CD4-positive, alpha-beta memory T cell (primary cell): ENCODE measurements at regions of chr19 and their contacts with region 1.

Region 1: DNA sequence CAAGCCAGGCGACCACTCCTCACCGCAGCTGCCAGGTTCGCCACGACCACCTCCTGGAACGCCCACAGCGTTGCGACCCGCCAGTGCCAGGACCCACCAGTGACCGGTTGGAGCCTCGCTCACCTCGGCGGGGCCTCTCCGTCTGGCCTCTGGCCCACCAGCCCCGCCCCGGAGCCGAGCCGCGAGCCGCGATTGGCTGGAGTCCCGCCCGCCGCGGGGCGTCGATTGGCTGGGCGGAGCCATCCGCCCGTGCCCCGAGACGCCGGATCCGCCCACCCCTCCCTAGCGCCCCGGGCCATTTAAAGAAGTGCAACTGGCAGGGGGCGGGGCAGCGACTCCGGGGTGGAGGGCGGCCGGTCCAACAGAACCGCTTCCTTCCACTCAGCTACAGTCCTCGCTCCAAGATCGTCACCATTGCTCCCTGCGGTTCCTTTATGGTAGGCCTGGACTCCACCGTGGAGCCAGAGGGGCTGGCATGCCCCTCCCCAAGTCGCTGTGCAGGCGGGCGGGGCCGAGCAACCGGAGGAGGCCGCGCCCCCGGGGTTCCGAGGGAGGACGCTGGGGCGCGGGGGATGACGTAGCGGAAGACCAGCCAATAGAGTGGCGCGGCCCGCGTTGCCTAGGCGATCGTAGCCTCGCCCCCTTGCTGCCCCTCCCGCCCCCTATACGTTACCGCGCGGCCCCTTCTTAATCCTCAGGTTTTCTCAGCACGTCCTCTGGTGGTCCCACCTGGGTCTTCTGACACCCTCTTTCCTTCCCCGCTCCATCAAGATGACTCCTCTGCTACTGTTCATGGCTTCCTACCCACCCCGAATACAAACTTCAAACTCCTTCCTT is at the start of gene SERTAD3:
- DNase-seq: peak; percentile 96 to 99 (median 97)
- H3K4me3 ChIP-seq: peak within 1 kb of the TSS; percentile 96 to 100
- H3K4me3 Mint-ChIP-seq: peak within 1 kb of the TSS; percentile 96 to 100 (median 100)
- H3K27ac ChIP-seq: peak within 1 kb of the TSS; percentile 75
- H3K27ac Mint-ChIP-seq: peak within 1 kb of the TSS; percentile 85 to 100 (median 99)
- H3K4me1 ChIP-seq: peaks cover 11% of the 10 kb centered on the region
- H3K4me1 Mint-ChIP-seq: peaks cover 11 to 22% (median 18%) of the 10 kb centered on the region in 4 donors
- H3K27me3 ChIP-seq: no peaks in the 10 kb centered on the region
- H3K27me3 Mint-ChIP-seq: no peaks in the 10 kb centered on the region
- total RNA-seq, gene SERTAD3: 17.8 to 19.4 TPM

Region 2: DNA sequence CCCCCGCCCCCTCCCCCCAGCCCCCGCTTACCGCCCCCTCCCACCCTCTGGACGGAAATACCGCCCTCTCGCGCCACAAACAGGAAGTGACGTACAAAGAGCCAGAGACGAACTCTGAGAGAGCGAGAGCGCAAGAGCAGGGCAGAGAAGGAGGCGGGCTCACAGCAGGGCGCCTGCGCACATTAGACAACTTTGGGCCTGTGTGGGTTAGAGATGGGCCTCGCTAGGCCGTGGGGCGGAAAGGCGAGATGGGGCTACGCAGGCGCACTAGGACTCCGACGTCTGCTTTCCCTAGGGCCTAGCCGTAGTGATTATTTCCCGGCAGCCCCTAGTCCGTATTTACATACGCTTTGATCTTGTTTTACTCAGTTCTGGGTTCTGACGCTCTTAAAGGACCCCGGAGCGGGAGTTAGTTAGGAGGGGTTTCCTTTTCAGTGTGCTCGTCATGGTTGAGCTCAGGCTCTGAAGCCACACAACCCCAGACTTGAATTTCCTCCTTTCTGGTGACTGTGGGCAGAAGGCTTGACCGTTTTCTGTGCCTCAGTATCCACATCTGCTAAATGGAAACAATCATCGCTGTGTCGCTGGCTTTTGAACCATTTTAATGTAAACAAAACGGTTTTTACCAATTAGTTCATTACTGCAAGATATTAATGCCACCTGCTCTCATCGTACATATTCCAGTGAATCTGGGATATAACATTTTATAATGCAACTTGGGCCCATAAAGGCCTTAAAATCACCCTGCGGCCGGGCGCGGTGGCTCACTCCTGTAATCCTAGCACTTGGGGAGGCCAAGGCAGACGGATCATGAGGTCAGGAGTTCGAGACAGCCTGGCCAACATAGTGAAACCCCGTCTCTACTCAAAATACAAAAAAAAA is 158.8 kb before region 1 on chr19:
- CTCF ChIA-PET with region 1: no interaction called
- POLR2A ChIA-PET with region 1: interaction called, 5 read pairs
- intact Hi-C with region 1: loop called (anchors 1 kb)
- DNase-seq: peak; percentile 97 to 100 (median 100)
- H3K4me3 ChIP-seq: peak overlapping the region; percentile 45 to 58
- H3K4me3 Mint-ChIP-seq: peak overlapping the region; percentile 84 to 98 (median 92)
- H3K27ac ChIP-seq: peak overlapping the region; percentile 88
- H3K27ac Mint-ChIP-seq: peak overlapping the region; percentile 93 to 99 (median 98)
- H3K4me1 ChIP-seq: peaks cover 49% of the 10 kb centered on the region
- H3K4me1 Mint-ChIP-seq: peaks cover 26 to 56% (median 40%) of the 10 kb centered on the region in 4 donors
- H3K27me3 ChIP-seq: no peaks in the 10 kb centered on the region
- H3K27me3 Mint-ChIP-seq: no peaks in the 10 kb centered on the region

Region 3: GRCh38 chr19:40348125-40348913 is 96.1 kb before region 1 on chr19 and contains the starts of genes C19orf47 and PLD3:
- CTCF ChIA-PET with region 1: no interaction called
- POLR2A ChIA-PET with region 1: interaction called, 19 read pairs
- intact Hi-C with region 1: loop called (anchors 1 kb)
- DNase-seq: peak; percentile 97 to 99 (median 99)
- H3K4me3 ChIP-seq: peak within 1 kb of the TSS; percentile 48 to 73
- H3K4me3 Mint-ChIP-seq: peak within 1 kb of the TSS; percentile 85 to 99 (median 94)
- H3K27ac ChIP-seq: peak within 1 kb of the TSS; percentile 84
- H3K27ac Mint-ChIP-seq: peak within 1 kb of the TSS; percentile 86 to 99 (median 95)
- H3K4me1 ChIP-seq: peaks cover 19% of the 10 kb centered on the region
- H3K4me1 Mint-ChIP-seq: peaks cover 27 to 44% (median 33%) of the 10 kb centered on the region in 4 donors
- H3K27me3 ChIP-seq: no peaks in the 10 kb centered on the region
- H3K27me3 Mint-ChIP-seq: no peaks in the 10 kb centered on the region
- total RNA-seq, gene C19orf47: 13.7 to 17.7 TPM
- total RNA-seq, gene PLD3: 116 to 117 TPM

Region 4: DNA sequence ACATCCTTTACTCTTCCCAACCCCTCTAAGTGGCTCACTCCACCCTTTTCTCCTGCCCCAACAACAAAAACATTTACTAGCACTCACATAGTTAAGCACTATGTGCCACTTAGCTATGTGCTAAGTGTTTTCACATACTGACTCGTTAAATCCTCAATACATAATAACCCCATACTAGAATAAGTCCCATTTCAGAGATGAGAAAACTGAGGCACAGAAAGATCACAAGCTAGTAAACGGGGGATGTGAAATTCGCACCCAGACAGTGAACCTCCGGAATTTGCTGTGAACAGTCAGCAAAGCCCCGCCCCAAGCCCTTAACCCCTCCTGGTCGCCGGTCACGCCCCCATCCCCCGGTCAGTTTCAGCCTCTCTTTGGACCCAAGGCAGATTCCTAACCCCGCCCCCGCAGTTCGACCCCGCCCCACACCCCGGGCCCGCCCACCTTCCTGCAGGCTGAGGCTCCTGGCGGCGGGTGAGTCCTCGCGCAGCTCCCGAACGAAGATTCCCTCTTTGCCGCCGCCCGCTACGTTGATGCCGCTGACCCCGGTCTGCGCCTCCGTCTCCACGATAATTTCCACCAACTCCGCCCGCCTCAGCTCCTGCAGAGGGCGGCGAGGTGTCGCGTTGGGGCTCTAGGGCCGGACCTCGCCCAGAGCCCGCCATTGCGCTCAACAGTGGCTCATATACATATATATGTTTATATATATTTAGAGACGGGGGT is 41.0 kb before region 1 on chr19:
- CTCF ChIA-PET with region 1: no interaction called
- POLR2A ChIA-PET with region 1: interaction called, 22 read pairs
- intact Hi-C with region 1: loop called (anchors 1 kb)
- DNase-seq: peak; percentile 61 to 80 (median 64)
- H3K4me3 ChIP-seq: peak overlapping the region; percentile 59 to 69
- H3K4me3 Mint-ChIP-seq: peak overlapping the region; percentile 86 to 99 (median 96)
- H3K27ac ChIP-seq: peak overlapping the region; percentile 43
- H3K27ac Mint-ChIP-seq: peak overlapping the region; percentile 46 to 95 (median 90)
- H3K4me1 ChIP-seq: peaks cover 18% of the 10 kb centered on the region
- H3K4me1 Mint-ChIP-seq: peaks cover 22 to 38% (median 29%) of the 10 kb centered on the region in 4 donors
- H3K27me3 ChIP-seq: no peaks in the 10 kb centered on the region
- H3K27me3 Mint-ChIP-seq: no peaks in the 10 kb centered on the region

Region 5: GRCh38 chr19:40425450-40426287 is 18.7 kb before region 1 on chr19 and contains the start of gene SERTAD1:
- CTCF ChIA-PET with region 1: interaction called, 33 read pairs
- POLR2A ChIA-PET with region 1: interaction called, 227 read pairs
- intact Hi-C with region 1: loop called (anchors 1 kb)
- DNase-seq: peak; percentile 100
- H3K4me3 ChIP-seq: peak within 1 kb of the TSS; percentile 79 to 85
- H3K4me3 Mint-ChIP-seq: peak within 1 kb of the TSS; percentile 92 to 99 (median 95)
- H3K27ac ChIP-seq: peak within 1 kb of the TSS; percentile 92
- H3K27ac Mint-ChIP-seq: peak within 1 kb of the TSS; percentile 97 to 99 (median 98)
- H3K4me1 ChIP-seq: peaks cover 28% of the 10 kb centered on the region
- H3K4me1 Mint-ChIP-seq: peaks cover 11 to 34% (median 22%) of the 10 kb centered on the region in 4 donors
- H3K27me3 ChIP-seq: no peaks in the 10 kb centered on the region
- H3K27me3 Mint-ChIP-seq: peaks cover 0 to 2% of the 10 kb centered on the region in 2 donors
- total RNA-seq, gene SERTAD1: 10.6 to 11.3 TPM

Region 6: DNA sequence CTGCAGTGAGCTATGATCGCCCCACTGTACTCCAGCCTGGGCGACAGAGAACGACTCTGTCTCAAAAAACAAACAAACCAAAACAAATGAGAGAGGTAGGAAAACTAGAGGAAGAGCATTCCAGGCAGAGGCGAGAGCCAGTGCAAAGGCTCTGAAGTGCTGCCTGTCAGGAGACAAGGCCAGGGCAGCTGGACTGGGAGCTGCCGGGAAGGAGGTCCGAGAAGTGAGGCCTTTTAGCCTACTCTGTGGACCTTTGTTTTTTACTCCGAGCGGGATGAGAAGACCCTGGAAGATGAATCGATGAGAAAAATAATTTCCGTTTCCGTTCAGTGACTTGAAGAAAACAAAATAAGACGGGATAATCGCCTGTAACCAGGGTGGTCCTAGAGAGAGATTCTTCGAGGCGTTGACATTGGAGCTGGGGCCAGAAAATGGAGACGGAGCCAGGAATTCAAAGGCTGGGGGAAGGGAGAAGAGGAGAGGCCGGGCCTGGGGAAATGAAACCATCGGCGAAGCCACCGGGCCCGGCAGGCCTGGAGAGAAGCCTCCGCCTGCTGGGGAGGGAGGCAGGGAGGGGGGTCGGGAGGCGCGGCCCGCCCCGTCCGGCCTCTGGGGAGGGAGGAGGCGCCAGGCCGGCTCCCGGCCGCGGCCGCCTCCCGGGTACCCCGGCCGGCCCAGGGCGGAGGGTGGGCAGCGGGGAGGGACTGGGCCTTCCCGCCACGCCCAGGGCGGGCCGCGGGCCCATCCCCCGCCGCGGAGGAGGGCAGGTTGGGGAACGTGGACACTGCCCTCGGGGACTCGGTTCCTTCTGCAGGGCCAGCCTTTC is 10.8 kb before region 1 on chr19:
- CTCF ChIA-PET with region 1: interaction called, 3 read pairs
- POLR2A ChIA-PET with region 1: interaction called, 34 read pairs
- intact Hi-C with region 1: loop called (anchors 1 kb)
- DNase-seq: peak; percentile 45 to 65 (median 48)
- H3K4me3 ChIP-seq: peak overlapping the region; percentile 30 to 58
- H3K4me3 Mint-ChIP-seq: peak overlapping the region; percentile 87 to 97 (median 92)
- H3K27ac ChIP-seq: peak overlapping the region; percentile 69
- H3K27ac Mint-ChIP-seq: peak overlapping the region; percentile 76 to 98 (median 97)
- H3K4me1 ChIP-seq: peaks cover 13% of the 10 kb centered on the region
- H3K4me1 Mint-ChIP-seq: peaks cover 5 to 10% (median 7%) of the 10 kb centered on the region in 4 donors
- H3K27me3 ChIP-seq: no peaks in the 10 kb centered on the region
- H3K27me3 Mint-ChIP-seq: no peaks in the 10 kb centered on the region

Region 7: DNA sequence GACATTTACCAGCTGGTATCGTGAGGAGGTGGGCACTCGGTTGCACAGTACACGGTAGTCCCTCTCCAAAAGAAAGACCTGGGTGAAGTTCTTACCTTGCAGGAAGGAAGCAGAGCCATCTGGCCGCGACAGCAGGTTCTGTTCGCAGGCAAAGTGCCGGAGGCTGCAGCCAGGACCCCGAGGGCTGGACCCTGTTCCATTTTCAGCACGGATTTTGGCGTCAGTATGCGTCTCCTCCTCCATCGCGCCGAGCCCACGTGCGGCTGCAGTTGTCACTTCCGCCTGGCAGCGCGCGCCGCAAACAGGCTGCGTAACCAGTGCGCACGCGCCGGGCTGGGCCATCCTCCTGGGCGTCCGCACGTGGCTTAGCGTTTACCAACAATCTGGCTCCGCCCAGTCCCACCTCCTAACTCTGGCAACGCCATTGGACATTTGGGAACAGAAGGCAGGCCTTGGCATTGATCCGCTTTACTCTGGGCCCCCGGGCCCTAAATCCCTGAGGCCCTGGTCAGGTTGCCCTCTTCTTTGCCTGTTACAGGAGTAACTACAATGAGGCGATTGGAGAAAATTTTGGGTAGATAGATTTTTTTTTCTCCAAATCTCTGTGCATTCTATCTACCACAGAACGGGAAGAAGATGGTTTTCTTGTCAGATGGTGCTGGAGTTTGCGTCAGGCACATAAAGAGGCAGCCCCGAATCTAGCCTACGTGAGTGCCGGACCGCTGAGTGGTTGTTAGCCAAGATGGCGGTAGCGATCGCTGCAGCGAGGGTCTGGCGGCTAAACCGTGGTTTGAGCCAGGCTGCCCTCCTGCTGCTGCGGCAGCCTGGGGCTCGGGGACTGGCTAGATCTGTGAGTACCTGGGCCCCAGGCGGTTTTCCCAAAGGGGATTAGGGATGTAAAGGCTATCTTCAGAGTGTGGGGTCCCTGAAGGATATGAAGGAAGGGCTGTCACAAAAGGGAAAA is 953.0 kb after region 1 on chr19 and contains the starts of genes BCKDHA and EXOSC5:
- CTCF ChIA-PET with region 1: no interaction called
- POLR2A ChIA-PET with region 1: no interaction called
- intact Hi-C with region 1: loop called (anchors 2 kb)
- DNase-seq: peak; percentile 98 to 100 (median 100)
- H3K4me3 ChIP-seq: peak within 1 kb of the TSS; percentile 94 to 96
- H3K4me3 Mint-ChIP-seq: peak within 1 kb of the TSS; percentile 94 to 100 (median 98)
- H3K27ac ChIP-seq: peak within 1 kb of the TSS; percentile 93
- H3K27ac Mint-ChIP-seq: peak within 1 kb of the TSS; percentile 98 to 100 (median 100)
- H3K4me1 ChIP-seq: peaks cover 31% of the 10 kb centered on the region
- H3K4me1 Mint-ChIP-seq: peaks cover 27 to 54% (median 41%) of the 10 kb centered on the region in 4 donors
- H3K27me3 ChIP-seq: no peaks in the 10 kb centered on the region
- H3K27me3 Mint-ChIP-seq: no peaks in the 10 kb centered on the region
- total RNA-seq, gene BCKDHA: 23.6 to 27.1 TPM
- total RNA-seq, gene EXOSC5: 18.2 to 23.0 TPM